ENCODE measurements at regions of chr10 and their contacts with region 1.

Region 1: GRCh38 chr10:37754538-37755323 is 102.7 kb downstream of the ZNF248 start:
- DNase-seq: peak; percentile 17
- H3K4me3 ChIP-seq: no peak overlapping the region
- H3K27ac ChIP-seq: no peak overlapping the region
- H3K4me1 ChIP-seq: no peaks in the 10 kb centered on the region
- H3K27me3 ChIP-seq: no peaks in the 10 kb centered on the region
- CTCF ChIP-seq: peak; percentile 19 to 54

Region 2: GRCh38 chr10:36888929-36889573 is 865.7 kb before region 1 on chr10:
- CTCF ChIA-PET with region 1: no interaction called
- dilution Hi-C with region 1: no loop called
- in situ Hi-C with region 1: no loop called
- intact Hi-C with region 1: loop called (anchors 2 kb)
- DNase-seq: peak; percentile 31
- H3K4me3 ChIP-seq: no peak overlapping the region
- H3K27ac ChIP-seq: no peak overlapping the region
- H3K4me1 ChIP-seq: no peaks in the 10 kb centered on the region
- H3K27me3 ChIP-seq: no peaks in the 10 kb centered on the region
- CTCF ChIP-seq: peak; percentile 34 to 36

Region 3: DNA sequence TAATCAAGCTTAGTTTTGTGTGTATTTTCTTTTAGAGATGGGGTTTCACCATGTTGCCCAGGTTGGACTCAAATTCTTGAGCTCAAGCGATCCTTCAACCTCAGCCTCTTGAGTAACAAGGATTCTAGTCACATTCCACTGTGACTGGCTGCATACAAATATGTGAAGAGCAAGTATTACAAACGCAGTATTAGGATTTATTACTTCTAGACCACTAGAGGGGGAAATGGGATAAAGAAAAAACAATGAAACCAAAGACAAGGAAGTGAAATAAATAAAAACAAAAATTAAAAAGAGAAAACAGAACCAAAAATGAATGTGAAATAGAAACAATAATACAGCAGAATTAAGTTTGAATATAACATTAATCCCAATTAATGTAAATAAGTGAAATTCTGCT is 320.6 kb before region 1 on chr10:
- CTCF ChIA-PET with region 1: no interaction called
- dilution Hi-C with region 1: no loop called
- in situ Hi-C with region 1: no loop called
- intact Hi-C with region 1: loop called (anchors 5 kb)
- DNase-seq: peak; percentile 34
- H3K4me3 ChIP-seq: no peak overlapping the region
- H3K27ac ChIP-seq: no peak overlapping the region
- H3K4me1 ChIP-seq: no peaks in the 10 kb centered on the region
- H3K27me3 ChIP-seq: no peaks in the 10 kb centered on the region
- CTCF ChIP-seq: no peak

Region 4: DNA sequence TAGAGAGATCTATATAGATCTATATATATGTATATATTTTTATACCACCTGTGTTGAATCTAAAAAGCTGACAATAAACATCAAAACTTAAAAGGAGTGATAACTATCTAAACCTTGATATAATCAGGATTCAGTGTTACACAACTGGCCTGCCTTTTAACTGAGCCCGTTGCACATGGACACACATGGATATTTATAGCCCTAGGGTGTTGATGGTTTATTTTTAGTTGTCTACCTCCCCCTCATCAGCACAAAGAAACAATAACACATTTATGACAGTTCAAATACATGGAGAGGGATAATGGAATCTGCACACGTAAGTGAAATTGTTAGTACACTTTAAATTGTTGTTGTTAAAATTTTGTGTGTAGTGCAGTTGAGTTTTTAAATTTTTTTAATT is 234.2 kb before region 1 on chr10:
- CTCF ChIA-PET with region 1: interaction called, 4 read pairs
- dilution Hi-C with region 1: no loop called
- in situ Hi-C with region 1: no loop called
- intact Hi-C with region 1: loop called (anchors 2 kb)
- DNase-seq: no peak
- H3K4me3 ChIP-seq: no peak overlapping the region
- H3K27ac ChIP-seq: no peak overlapping the region
- H3K4me1 ChIP-seq: no peaks in the 10 kb centered on the region
- H3K27me3 ChIP-seq: no peaks in the 10 kb centered on the region
- CTCF ChIP-seq: no peak